H1 (cell line): ENCODE measurements at regions of chr11 and their contacts with region 1.

Region 1: DNA sequence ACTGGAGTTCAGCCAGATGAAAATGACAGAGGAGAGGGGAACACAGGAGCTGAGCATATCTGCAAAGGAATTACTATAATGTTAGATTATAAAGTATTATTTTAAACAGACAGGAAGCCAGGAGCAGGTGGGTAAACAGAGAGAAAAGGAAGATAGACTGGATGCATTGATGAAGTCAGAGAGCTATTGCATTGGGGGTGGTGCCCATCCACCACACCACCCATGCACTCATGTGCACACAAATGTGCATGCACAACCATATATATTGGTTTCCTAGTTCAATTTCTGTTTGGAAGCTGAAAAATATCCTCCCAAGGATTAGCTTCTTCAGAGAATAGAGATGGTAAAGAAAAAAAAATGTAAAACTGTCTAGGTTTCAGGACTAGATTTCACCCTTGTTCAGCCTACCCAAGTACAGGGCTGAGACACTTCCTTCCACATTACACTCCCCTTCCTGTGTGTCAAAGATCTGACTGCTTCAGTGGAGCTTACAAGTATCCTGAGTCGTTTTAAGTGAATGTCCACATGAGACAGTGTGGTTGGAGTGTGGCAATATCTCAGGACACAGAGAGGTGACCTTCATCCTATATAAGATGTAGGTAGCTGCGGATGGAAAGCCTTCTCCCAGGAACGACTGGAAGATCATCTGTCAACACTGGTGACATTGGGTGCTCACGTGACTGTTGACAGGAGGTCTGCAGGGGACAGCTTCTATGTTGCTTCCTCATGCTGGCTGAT is 12.2 kb upstream of the SMPD1 start:
- DNase-seq: no peak
- H3K4me3 ChIP-seq: no peak overlapping the region
- H3K27ac ChIP-seq: no peak overlapping the region
- H3K4me1 ChIP-seq: peaks cover 0 to 9% (median 7%) of the 10 kb centered on the region in 4 experiments; a peak in 4 of 7 replicates
- H3K27me3 ChIP-seq: no peaks in the 10 kb centered on the region
- CTCF ChIP-seq: no peak
- EP300 ChIP-seq: no peak
- POLR2A ChIP-seq: no peak
- RAD21 ChIP-seq: no peak

Region 2: GRCh38 chr11:6315811-6316425 is 62.2 kb before region 1 on chr11:
- CTCF ChIA-PET with region 1: no interaction called
- POLR2A ChIA-PET with region 1: no interaction called
- DNase-seq: peak in 1 of 2 experiments; percentile 65
- H3K4me3 ChIP-seq: no peak overlapping the region
- H3K27ac ChIP-seq: no peak overlapping the region
- H3K4me1 ChIP-seq: peaks cover 2 to 24% (median 16%) of the 10 kb centered on the region in 4 experiments
- H3K27me3 ChIP-seq: peaks cover 0 to 3% (median 1%) of the 10 kb centered on the region in 4 experiments; a peak in 1 of 7 replicates
- CTCF ChIP-seq: peak; percentile 92 to 97 (median 96)
- EP300 ChIP-seq: no peak
- POLR2A ChIP-seq: no peak
- RAD21 ChIP-seq: peak; percentile 92 to 95

Region 3: GRCh38 chr11:6389921-6390724 is 12.1 kb after region 1 on chr11 and contains the start of gene SMPD1:
- CTCF ChIA-PET with region 1: interaction called, 59 read pairs
- POLR2A ChIA-PET with region 1: interaction called, 3 read pairs
- DNase-seq: peak; percentile 57 to 88
- H3K4me3 ChIP-seq: peak within 1 kb of the TSS; percentile 51 to 78 (median 62)
- H3K27ac ChIP-seq: no peak within 1 kb of the TSS; the same call in 1 of the 2 replicates
- H3K4me1 ChIP-seq: peaks cover 0 to 12% (median 9%) of the 10 kb centered on the region in 4 experiments; a peak in 6 of 7 replicates
- H3K27me3 ChIP-seq: peaks cover 2 to 8% (median 4%) of the 10 kb centered on the region in 4 experiments
- CTCF ChIP-seq: no peak
- EP300 ChIP-seq: no peak
- POLR2A ChIP-seq: 0 out of 3 replicates have a peak, but pooled peaks of 1 of the 2 experiments have one; percentile 26
- RAD21 ChIP-seq: no peak; a peak in 1 of 4 replicates
- total RNA-seq, gene SMPD1: 1.9 and 3.1 TPM in 2 replicates

Region 4: DNA sequence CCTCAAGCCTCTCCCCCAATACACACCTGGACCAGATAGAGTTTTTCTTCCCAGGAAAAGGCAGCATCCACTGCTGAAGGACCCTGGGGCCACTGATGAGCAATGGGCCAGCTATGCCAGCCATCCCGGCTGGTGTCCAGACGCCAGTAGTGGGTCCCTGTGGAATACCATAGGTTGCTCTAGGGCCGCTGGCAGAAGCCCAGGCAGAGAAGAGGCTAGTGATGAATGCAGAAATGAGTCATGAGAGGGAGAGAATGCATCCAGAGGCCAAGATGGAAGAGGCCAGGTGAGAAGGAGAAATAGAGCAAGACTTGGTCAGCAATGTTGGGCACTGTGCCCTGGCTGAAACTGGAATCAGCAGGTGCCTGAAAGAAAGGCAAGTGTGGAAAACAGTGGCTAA is 53.8 kb after region 1 on chr11:
- CTCF ChIA-PET with region 1: interaction called, 585 read pairs
- POLR2A ChIA-PET with region 1: no interaction called
- DNase-seq: no peak
- H3K4me3 ChIP-seq: no peak overlapping the region
- H3K27ac ChIP-seq: no peak overlapping the region
- H3K4me1 ChIP-seq: peaks cover 0 to 3% (median 1%) of the 10 kb centered on the region in 4 experiments; a peak in 2 of 7 replicates
- H3K27me3 ChIP-seq: 0 out of 7 replicates have a peak, but pooled peaks cover 0 to 2% (median 0%) of the 10 kb centered on the region in 4 experiments
- CTCF ChIP-seq: no peak
- EP300 ChIP-seq: no peak
- POLR2A ChIP-seq: no peak
- RAD21 ChIP-seq: no peak

Region 5: GRCh38 chr11:6458352-6459098 is 80.5 kb after region 1 on chr11:
- CTCF ChIA-PET with region 1: interaction called, 26 read pairs
- POLR2A ChIA-PET with region 1: no interaction called
- DNase-seq: no peak
- H3K4me3 ChIP-seq: no peak overlapping the region
- H3K27ac ChIP-seq: no peak overlapping the region
- H3K4me1 ChIP-seq: no peaks in the 10 kb centered on the region
- H3K27me3 ChIP-seq: no peaks in the 10 kb centered on the region
- CTCF ChIP-seq: no peak
- EP300 ChIP-seq: no peak
- POLR2A ChIP-seq: no peak
- RAD21 ChIP-seq: no peak

Region 6: GRCh38 chr11:6498121-6498520 is 120.0 kb after region 1 on chr11:
- CTCF ChIA-PET with region 1: interaction called, 107 read pairs
- POLR2A ChIA-PET with region 1: interaction called, 3 read pairs
- DNase-seq: no peak
- H3K4me3 ChIP-seq: no peak overlapping the region
- H3K27ac ChIP-seq: no peak overlapping the region
- H3K4me1 ChIP-seq: peaks cover 0 to 6% (median 1%) of the 10 kb centered on the region in 4 experiments; a peak in 4 of 7 replicates
- H3K27me3 ChIP-seq: no peaks in the 10 kb centered on the region
- CTCF ChIP-seq: no peak
- EP300 ChIP-seq: no peak
- POLR2A ChIP-seq: no peak
- RAD21 ChIP-seq: no peak